Transverse colon (tissue), 4 donors: ENCODE measurements at regions of chr2 and their contacts with region 1.

Region 1: GRCh38 chr2:84194949-84195644 is 264.0 kb downstream of the SUCLG1 start:
- DNase-seq: no peak
- H3K4me3 ChIP-seq: no peak overlapping the region
- H3K27ac ChIP-seq: no peak overlapping the region
- H3K4me1 ChIP-seq: no peaks in the 10 kb centered on the region
- H3K27me3 ChIP-seq: no peaks in the 10 kb centered on the region
- CTCF ChIP-seq: no peak
- EP300 ChIP-seq: no peak
- POLR2A ChIP-seq: no peak

Region 2: DNA sequence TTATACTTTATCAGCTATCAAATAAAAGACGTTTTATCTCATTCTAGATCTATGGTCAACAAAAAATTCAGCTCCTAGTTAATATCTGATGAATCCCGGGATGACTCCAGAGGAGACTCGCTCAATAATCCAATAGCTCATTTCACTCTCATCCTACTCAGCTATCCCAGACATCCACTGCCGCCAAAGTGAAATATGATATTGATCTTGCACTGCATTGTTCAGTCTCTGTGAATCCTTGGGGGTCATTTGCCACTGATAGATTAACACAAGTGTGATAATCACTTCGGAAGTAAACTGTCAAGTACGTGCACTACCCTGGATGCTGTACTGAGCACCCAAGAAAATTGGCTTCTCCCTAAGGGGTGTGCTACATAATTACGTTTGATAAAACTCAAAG is 14.8 kb after region 1 on chr2:
- in situ Hi-C with region 1: no loop called
- intact Hi-C with region 1: loop called (anchors 1 kb)
- DNase-seq: no peak
- H3K4me3 ChIP-seq: no peak overlapping the region
- H3K27ac ChIP-seq: no peak overlapping the region
- H3K4me1 ChIP-seq: no peaks in the 10 kb centered on the region
- H3K27me3 ChIP-seq: no peaks in the 10 kb centered on the region
- CTCF ChIP-seq: no peak
- EP300 ChIP-seq: no peak
- POLR2A ChIP-seq: no peak

Region 3: GRCh38 chr2:84383271-84383670 is 188.2 kb after region 1 on chr2:
- in situ Hi-C with region 1: no loop called
- intact Hi-C with region 1: no loop called
- DNase-seq: no peak
- H3K4me3 ChIP-seq: no peak overlapping the region
- H3K27ac ChIP-seq: no peak overlapping the region
- H3K4me1 ChIP-seq: no peaks in the 10 kb centered on the region
- H3K27me3 ChIP-seq: no peaks in the 10 kb centered on the region
- CTCF ChIP-seq: no peak
- EP300 ChIP-seq: no peak
- POLR2A ChIP-seq: no peak